ENCODE measurements at regions of chr9 and their contacts with region 1.

Region 1: DNA sequence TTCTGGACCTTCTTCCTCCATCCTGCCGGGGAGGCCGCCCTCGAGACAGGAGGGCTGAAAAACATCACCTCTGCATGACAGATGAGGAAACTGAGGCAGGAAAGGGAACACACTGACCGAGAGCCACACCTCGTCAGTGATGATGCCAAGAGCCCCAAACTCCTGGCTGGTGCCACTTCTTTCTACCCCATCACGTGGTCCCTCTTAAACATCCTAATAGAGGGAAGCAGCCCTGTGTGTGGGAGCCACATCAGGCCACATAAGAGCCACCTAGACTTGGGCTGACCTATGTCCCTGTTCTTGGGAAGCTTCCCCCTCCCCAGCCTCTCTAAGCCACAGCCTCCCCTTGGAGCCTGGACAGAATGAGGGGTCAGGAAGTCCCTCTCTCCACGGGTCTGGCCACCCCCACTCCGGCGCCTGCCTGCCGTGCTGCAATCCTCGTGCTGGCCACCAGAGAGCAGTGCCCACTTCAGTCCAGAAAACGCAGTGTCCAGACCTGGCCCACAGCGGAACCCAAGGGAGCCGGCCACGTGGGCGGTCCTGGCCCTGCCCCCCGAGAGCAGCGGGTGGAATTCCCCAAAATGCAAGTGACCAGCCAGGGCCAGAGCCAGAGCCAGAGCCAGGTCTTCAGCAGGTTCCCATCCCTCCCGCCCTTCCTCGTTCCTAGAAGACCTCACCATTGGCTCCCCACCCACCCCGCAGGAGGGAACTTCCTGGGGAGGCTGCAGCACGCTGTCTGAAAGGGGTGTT is 54.7 kb upstream of the SARDH start:
- DNase-seq: peak; percentile 68 to 86 (median 82)
- H3K4me3 ChIP-seq: no peak overlapping the region
- H3K27ac ChIP-seq: no peak overlapping the region
- H3K4me1 ChIP-seq: no peaks in the 10 kb centered on the region
- H3K27me3 ChIP-seq: no peaks in the 10 kb centered on the region
- CTCF ChIP-seq: peak; percentile 87 to 96 (median 95)
- EP300 ChIP-seq: no peak
- POLR2A ChIP-seq: no peak

Region 2: GRCh38 chr9:133994353-133995011 is 201.6 kb after region 1 on chr9:
- intact Hi-C with region 1: loop called (anchors 2 kb)
- DNase-seq: peak; percentile 71 to 89 (median 87)
- H3K4me3 ChIP-seq: no peak overlapping the region
- H3K27ac ChIP-seq: no peak overlapping the region
- H3K4me1 ChIP-seq: peaks cover 6% of the 10 kb centered on the region
- H3K27me3 ChIP-seq: no peaks in the 10 kb centered on the region
- CTCF ChIP-seq: peak; percentile 96 to 97 (median 97)
- EP300 ChIP-seq: no peak
- POLR2A ChIP-seq: no peak

Region 3: GRCh38 chr9:134162933-134163352 is 370.0 kb after region 1 on chr9:
- intact Hi-C with region 1: loop called in 1 of 4 experiments (anchors 1 kb)
- DNase-seq: no peak
- H3K4me3 ChIP-seq: no peak overlapping the region
- H3K27ac ChIP-seq: no peak overlapping the region
- H3K4me1 ChIP-seq: peaks cover 6% of the 10 kb centered on the region
- H3K27me3 ChIP-seq: no peaks in the 10 kb centered on the region
- CTCF ChIP-seq: no peak
- EP300 ChIP-seq: no peak
- POLR2A ChIP-seq: no peak